OCI-LY7 (cell line): ENCODE measurements at regions of chr6 and their contacts with region 1.

Region 1: GRCh38 chr6:106688186-106688951 is 59.0 kb downstream of the QRSL1 start:
- DNase-seq: peak; percentile 59
- H3K4me3 ChIP-seq: no peak overlapping the region
- H3K27ac ChIP-seq: no peak overlapping the region
- H3K4me1 ChIP-seq: peaks cover 47% of the 10 kb centered on the region
- CTCF ChIP-seq: peak; percentile 79

Region 2: GRCh38 chr6:106608062-106608668 is 80.2 kb before region 1 on chr6:
- CTCF ChIA-PET with region 1: no interaction called
- POLR2A ChIA-PET with region 1: interaction called, 4 read pairs
- intact Hi-C with region 1: loop called (anchors 1 kb)
- DNase-seq: peak; percentile 82
- H3K4me3 ChIP-seq: no peak overlapping the region
- H3K27ac ChIP-seq: no peak overlapping the region
- H3K4me1 ChIP-seq: peaks cover 51% of the 10 kb centered on the region
- CTCF ChIP-seq: peak; percentile 87

Region 3: DNA sequence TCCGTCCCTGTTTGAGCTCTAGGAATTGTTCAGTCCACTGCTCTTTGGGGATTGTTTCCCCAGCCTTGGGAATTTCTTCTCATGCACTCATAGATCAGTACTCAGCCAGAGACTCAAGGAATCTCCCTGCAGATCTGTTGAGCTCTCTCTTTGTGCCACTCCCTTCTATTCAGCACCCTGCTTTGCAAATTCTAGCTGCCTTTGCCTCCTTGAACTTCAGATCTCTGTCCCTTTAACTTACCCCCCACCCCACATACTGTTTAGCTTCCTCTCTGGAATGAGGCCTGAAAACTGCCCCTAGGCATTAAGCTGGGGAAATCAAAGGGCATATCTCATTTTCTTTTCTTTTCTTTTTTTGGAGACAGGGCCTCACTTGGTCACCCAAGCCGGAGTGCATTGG is 28.5 kb before region 1 on chr6:
- CTCF ChIA-PET with region 1: interaction called, 12 read pairs
- POLR2A ChIA-PET with region 1: interaction called, 3 read pairs
- intact Hi-C with region 1: no loop called
- DNase-seq: no peak
- H3K4me3 ChIP-seq: no peak overlapping the region
- H3K27ac ChIP-seq: no peak overlapping the region
- H3K4me1 ChIP-seq: peaks cover 23% of the 10 kb centered on the region
- CTCF ChIP-seq: no peak